B cell (primary cell): ENCODE measurements at regions of chr3 and their contacts with region 1.

Region 1: GRCh38 chr3:179562591-179563270 is at the start of gene ACTL6A:
- DNase-seq: peak; percentile 98
- ATAC-seq: peak; percentile 90
- H3K4me3 ChIP-seq: peak within 1 kb of the TSS; percentile 55 to 87 (median 83)
- H3K4me3 Mint-ChIP-seq: peak within 1 kb of the TSS; percentile 98
- H3K27ac ChIP-seq: peak within 1 kb of the TSS; percentile 58 to 73
- H3K27ac Mint-ChIP-seq: peak within 1 kb of the TSS; percentile 94
- H3K4me1 ChIP-seq: peaks cover 9% of the 10 kb centered on the region in 2 donors
- H3K4me1 Mint-ChIP-seq: peaks cover 26% of the 10 kb centered on the region
- H3K27me3 ChIP-seq: no peaks in the 10 kb centered on the region
- H3K27me3 Mint-ChIP-seq: no peaks in the 10 kb centered on the region
- CTCF ChIP-seq: no peak
- total RNA-seq, gene ACTL6A: 48.5 and 55.1 TPM in 2 replicates

Region 2: GRCh38 chr3:179098388-179099077 is 464.2 kb before region 1 on chr3:
- CTCF ChIA-PET with region 1: no interaction called
- POLR2A ChIA-PET with region 1: no interaction called
- intact Hi-C with region 1: loop called (anchors 10 kb)
- DNase-seq: no peak
- ATAC-seq: no peak
- H3K4me3 ChIP-seq: no peak overlapping the region
- H3K4me3 Mint-ChIP-seq: no peak overlapping the region
- H3K27ac ChIP-seq: no peak overlapping the region
- H3K27ac Mint-ChIP-seq: no peak overlapping the region
- H3K4me1 ChIP-seq: no peaks in the 10 kb centered on the region
- H3K4me1 Mint-ChIP-seq: no peaks in the 10 kb centered on the region
- H3K27me3 ChIP-seq: no peaks in the 10 kb centered on the region
- H3K27me3 Mint-ChIP-seq: peaks cover 3% of the 10 kb centered on the region
- CTCF ChIP-seq: no peak

Region 3: DNA sequence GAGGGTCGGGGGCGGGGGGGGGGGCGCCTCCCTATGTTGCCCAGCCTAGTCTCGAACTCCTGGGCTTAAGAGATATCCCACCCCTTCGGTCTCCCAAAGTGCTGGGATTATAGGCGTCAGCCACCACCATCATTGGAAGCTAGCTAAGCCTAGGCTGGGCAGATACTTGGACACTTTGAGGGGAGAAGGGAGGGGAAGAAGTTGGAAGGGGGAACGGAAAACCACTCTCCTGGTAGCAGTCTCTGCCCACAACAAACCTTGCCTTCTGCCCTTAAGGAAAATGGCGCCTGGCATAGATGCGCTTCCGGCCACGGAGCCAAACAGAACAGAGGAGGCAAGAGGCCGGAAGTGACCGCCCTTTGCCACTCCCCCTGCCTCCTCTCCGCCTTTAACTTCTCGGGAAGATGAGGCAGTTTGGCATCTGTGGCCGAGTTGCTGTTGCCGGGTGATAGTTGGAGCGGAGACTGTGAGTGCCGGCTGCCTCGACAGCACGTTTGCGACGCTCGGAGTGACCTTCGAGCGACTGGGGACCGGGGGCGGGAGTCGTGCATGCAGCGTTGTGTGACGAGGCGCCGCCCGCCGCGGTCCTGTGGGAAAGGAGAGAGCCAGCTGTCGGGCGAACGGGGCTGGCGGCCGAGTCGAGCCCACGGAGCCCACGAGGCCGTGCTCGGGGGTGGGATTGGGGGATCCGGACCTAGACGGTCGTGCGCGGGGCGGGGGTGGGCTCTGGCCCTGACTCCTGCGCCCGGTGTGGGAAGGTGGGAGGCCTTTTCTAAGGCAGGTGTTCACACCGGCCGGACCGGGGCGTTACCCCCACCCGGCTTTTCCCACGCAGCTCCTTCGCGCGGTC is 215.2 kb before region 1 on chr3 and contains the start of gene MFN1:
- CTCF ChIA-PET with region 1: interaction called, 3 read pairs
- POLR2A ChIA-PET with region 1: interaction called, 3 read pairs
- intact Hi-C with region 1: loop called (anchors 1 kb)
- DNase-seq: peak; percentile 92
- ATAC-seq: peak; percentile 88
- H3K4me3 ChIP-seq: peak within 1 kb of the TSS; percentile 83 to 99 (median 98)
- H3K4me3 Mint-ChIP-seq: peak within 1 kb of the TSS; percentile 95
- H3K27ac ChIP-seq: peak within 1 kb of the TSS; percentile 71 to 86
- H3K27ac Mint-ChIP-seq: peak within 1 kb of the TSS; percentile 93
- H3K4me1 ChIP-seq: peaks cover 17 to 32% of the 10 kb centered on the region in 2 donors
- H3K4me1 Mint-ChIP-seq: peaks cover 28% of the 10 kb centered on the region
- H3K27me3 ChIP-seq: no peaks in the 10 kb centered on the region
- H3K27me3 Mint-ChIP-seq: no peaks in the 10 kb centered on the region
- CTCF ChIP-seq: no peak
- total RNA-seq, gene MFN1: 98.9 and 108 TPM in 2 replicates

Region 4: DNA sequence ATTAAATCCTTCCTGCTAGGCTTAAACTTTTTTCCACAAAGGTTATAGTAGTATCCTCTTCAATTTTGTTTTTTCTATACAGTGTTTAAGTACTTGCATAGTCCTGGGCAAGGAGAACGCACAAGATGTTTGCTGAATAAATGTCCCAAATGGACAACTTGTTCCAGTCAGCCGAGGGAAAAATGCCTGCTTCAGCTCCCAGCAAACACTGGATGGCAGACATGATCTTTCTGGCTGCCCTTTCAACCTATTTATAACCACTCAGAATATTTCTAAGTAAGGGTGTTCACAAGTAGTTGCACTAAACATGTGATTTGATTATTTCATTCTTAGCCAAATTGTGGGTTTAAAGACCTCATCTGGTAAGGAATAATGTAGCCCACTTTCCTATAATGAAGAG is 141.2 kb before region 1 on chr3:
- CTCF ChIA-PET with region 1: interaction called, 24 read pairs
- POLR2A ChIA-PET with region 1: no interaction called
- intact Hi-C with region 1: loop called (anchors 1 kb)
- DNase-seq: peak; percentile 50
- ATAC-seq: no peak
- H3K4me3 ChIP-seq: no peak overlapping the region
- H3K4me3 Mint-ChIP-seq: no peak overlapping the region
- H3K27ac ChIP-seq: no peak overlapping the region
- H3K27ac Mint-ChIP-seq: no peak overlapping the region
- H3K4me1 ChIP-seq: no peaks in the 10 kb centered on the region
- H3K4me1 Mint-ChIP-seq: no peaks in the 10 kb centered on the region
- H3K27me3 ChIP-seq: no peaks in the 10 kb centered on the region
- H3K27me3 Mint-ChIP-seq: no peaks in the 10 kb centered on the region
- CTCF ChIP-seq: peak; percentile 30

Region 5: DNA sequence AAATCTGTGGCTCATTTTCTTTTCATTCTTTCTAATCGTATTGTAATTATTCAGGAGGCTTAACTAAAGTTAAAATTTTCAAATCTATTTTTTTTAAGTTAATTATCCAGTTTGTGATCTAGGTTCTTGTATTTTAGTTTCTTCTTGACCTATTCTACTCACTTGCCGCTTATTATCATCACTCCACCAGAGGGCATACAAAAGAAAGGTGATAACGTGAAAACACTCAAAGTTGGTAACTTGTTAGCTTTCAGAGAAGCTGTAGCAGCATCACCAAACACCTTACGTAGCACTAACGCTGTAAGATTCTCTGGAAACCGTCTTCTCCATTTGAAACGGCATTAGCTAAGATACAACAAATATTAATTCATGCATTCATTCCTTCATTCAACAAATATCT is 116.2 kb before region 1 on chr3:
- CTCF ChIA-PET with region 1: interaction called, 7 read pairs
- POLR2A ChIA-PET with region 1: no interaction called
- intact Hi-C with region 1: loop called (anchors 1 kb)
- DNase-seq: peak; percentile 46
- ATAC-seq: no peak
- H3K4me3 ChIP-seq: no peak overlapping the region
- H3K4me3 Mint-ChIP-seq: no peak overlapping the region
- H3K27ac ChIP-seq: no peak overlapping the region
- H3K27ac Mint-ChIP-seq: no peak overlapping the region
- H3K4me1 ChIP-seq: peaks cover 10 to 13% of the 10 kb centered on the region in 2 donors
- H3K4me1 Mint-ChIP-seq: peaks cover 32% of the 10 kb centered on the region
- H3K27me3 ChIP-seq: no peaks in the 10 kb centered on the region
- H3K27me3 Mint-ChIP-seq: no peaks in the 10 kb centered on the region
- CTCF ChIP-seq: no peak

Region 6: GRCh38 chr3:179451265-179452175 is 111.2 kb before region 1 on chr3 and contains the start of gene GNB4:
- CTCF ChIA-PET with region 1: interaction called, 7 read pairs
- POLR2A ChIA-PET with region 1: no interaction called
- intact Hi-C with region 1: loop called (anchors 1 kb)
- DNase-seq: peak; percentile 91
- ATAC-seq: peak; percentile 86
- H3K4me3 ChIP-seq: peak within 1 kb of the TSS; percentile 70 to 92 (median 78)
- H3K4me3 Mint-ChIP-seq: peak within 1 kb of the TSS; percentile 97
- H3K27ac ChIP-seq: peak within 1 kb of the TSS; percentile 57 to 75
- H3K27ac Mint-ChIP-seq: peak within 1 kb of the TSS; percentile 94
- H3K4me1 ChIP-seq: peaks cover 16 to 19% of the 10 kb centered on the region in 2 donors
- H3K4me1 Mint-ChIP-seq: peaks cover 44% of the 10 kb centered on the region
- H3K27me3 ChIP-seq: no peaks in the 10 kb centered on the region
- H3K27me3 Mint-ChIP-seq: no peaks in the 10 kb centered on the region
- CTCF ChIP-seq: no peak
- total RNA-seq, gene GNB4: 24.0 and 24.6 TPM in 2 replicates

Region 7: DNA sequence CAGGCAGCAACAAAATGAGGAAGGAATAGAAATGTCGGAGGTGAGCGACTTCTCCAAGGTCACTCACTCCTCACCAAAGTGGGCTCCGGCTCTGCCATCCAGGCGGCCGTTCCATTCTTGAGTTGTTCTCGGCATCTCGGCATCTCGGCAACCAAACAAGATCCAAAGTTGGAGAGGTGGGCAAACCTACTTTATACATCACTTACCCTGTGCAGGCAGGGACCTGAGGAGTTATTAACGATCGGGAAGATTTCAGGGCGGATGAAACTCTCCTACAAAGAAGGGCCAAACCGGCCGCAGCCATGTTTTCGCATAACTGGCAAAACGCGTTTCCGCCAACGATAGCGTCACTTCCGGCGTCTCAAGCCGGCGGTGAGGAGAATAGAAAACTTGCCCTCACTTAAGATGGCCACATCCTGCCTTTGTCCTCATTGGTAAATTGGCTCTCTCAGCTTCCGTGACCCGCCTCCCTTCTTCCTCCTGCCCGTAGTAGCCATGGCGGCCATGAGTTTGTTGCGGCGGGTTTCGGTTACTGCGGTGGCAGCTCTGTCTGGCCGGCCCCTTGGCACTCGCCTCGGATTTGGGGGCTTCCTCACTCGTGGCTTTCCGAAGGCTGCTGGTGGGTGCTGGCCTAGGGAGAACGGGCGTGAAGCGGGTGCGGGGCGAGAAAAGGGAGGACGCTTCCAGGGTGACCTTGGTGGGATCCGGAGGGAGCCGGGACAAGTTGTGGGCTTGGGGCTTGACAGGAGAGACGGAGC is 41.8 kb after region 1 on chr3 and contains the starts of genes MRPL47 and NDUFB5:
- CTCF ChIA-PET with region 1: interaction called, 4 read pairs
- POLR2A ChIA-PET with region 1: no interaction called
- intact Hi-C with region 1: loop called (anchors 1 kb)
- DNase-seq: peak; percentile 96
- ATAC-seq: peak; percentile 98
- H3K4me3 ChIP-seq: peak within 1 kb of the TSS; percentile 65 to 96 (median 80)
- H3K4me3 Mint-ChIP-seq: peak within 1 kb of the TSS; percentile 99
- H3K27ac ChIP-seq: peak within 1 kb of the TSS; percentile 72 to 97
- H3K27ac Mint-ChIP-seq: peak within 1 kb of the TSS; percentile 98
- H3K4me1 ChIP-seq: peaks cover 39 to 44% of the 10 kb centered on the region in 2 donors
- H3K4me1 Mint-ChIP-seq: peaks cover 51% of the 10 kb centered on the region
- H3K27me3 ChIP-seq: no peaks in the 10 kb centered on the region
- H3K27me3 Mint-ChIP-seq: no peaks in the 10 kb centered on the region
- CTCF ChIP-seq: no peak
- total RNA-seq, gene MRPL47: 20.2 and 22.0 TPM in 2 replicates
- total RNA-seq, gene NDUFB5: 52.9 and 60.2 TPM in 2 replicates